Activated CD4-positive, alpha-beta T cell treated with anti-CD3 and anti-CD28 coated beads, Interleukin-2, amount 10 ng/mL, durations not matched to agents 24 days and 14 days (primary cell): ENCODE measurements at regions of chr10 and their contacts with region 1.

Region 1: GRCh38 chr10:95864906-95865813 is 42.6 kb upstream of the CC2D2B start:
- DNase-seq: peak; percentile 88
- H3K4me3 Mint-ChIP-seq: peak overlapping the region; percentile 22
- H3K27ac Mint-ChIP-seq: peak overlapping the region; percentile 71
- H3K4me1 Mint-ChIP-seq: peaks cover 30% of the 10 kb centered on the region
- H3K27me3 Mint-ChIP-seq: no peaks in the 10 kb centered on the region

Region 2: GRCh38 chr10:95552679-95553342 is 312.3 kb before region 1 on chr10:
- intact Hi-C with region 1: no loop called
- DNase-seq: no peak
- H3K4me3 Mint-ChIP-seq: no peak overlapping the region
- H3K27ac Mint-ChIP-seq: no peak overlapping the region
- H3K4me1 Mint-ChIP-seq: no peaks in the 10 kb centered on the region
- H3K27me3 Mint-ChIP-seq: peaks cover 13% of the 10 kb centered on the region

Region 3: DNA sequence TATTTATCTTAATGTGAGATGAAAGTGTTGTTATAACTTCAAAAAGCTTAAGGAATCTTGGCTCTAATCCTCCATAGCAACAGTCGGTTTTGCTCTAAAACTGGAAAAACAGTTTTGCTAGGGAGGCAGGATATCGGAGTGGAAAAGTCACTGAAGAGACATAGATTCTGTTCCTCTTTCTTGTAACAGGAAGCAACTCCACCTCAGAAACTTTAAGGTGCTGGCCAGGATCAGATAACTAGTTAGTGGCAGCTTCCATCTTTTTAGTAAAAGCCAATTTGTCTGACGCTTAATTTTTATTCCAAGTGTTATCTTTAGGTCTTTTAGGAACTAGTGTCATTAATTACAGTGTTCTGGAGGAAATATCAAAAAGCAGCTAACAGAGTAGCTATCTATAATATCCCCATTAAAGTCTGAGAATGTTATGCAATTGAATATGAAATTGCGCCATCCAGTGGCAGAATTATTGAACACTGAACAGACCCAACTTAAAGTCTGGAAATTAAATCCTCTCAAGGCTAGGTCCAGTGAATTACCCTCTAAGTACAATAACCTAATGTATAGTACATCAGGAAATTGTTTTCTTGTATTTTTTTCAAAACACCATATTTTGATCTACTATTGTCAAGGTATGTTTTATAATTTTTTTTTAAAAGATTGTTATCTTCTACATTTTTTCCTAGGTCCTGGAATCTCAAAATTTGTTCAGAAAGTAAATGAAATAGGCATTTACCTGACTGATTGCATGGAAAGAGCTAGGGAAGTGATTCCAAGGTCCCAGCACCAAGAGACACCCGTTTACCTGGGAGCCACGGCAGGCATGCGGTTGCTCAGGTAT is 23.3 kb before region 1 on chr10:
- intact Hi-C with region 1: loop called (anchors 1 kb)
- DNase-seq: peak; percentile 85
- H3K4me3 Mint-ChIP-seq: peak overlapping the region; percentile 45
- H3K27ac Mint-ChIP-seq: peak overlapping the region; percentile 78
- H3K4me1 Mint-ChIP-seq: peaks cover 42% of the 10 kb centered on the region
- H3K27me3 Mint-ChIP-seq: no peaks in the 10 kb centered on the region